ENCODE measurements at regions of chr9 and their contacts with region 1.

Region 1: DNA sequence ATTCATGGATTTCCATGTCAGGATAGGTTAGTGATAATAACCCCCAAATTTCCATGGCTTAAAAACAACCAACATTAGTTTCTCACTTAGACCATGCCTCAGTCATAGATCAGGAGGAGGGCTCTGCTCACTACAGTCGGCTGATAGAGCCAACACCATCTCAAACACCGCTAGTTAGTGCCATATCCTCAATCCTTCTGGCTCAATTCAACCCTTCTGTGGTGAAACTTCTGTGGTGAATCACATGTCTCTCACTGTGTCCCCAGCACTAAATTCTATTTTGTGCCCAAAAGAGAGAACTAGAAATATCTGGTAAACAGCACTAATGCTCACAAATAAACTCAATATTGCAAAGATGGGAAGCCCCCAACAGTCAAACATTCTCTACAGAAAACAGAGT is 21.1 kb downstream of the ECPAS start:
- DNase-seq: no peak
- H3K4me3 ChIP-seq: no peak overlapping the region
- H3K27ac ChIP-seq: no peak overlapping the region
- H3K4me1 ChIP-seq: no peaks in the 10 kb centered on the region
- H3K27me3 ChIP-seq: no peaks in the 10 kb centered on the region
- CTCF ChIP-seq: no peak
- POLR2A ChIP-seq: no peak

Region 2: DNA sequence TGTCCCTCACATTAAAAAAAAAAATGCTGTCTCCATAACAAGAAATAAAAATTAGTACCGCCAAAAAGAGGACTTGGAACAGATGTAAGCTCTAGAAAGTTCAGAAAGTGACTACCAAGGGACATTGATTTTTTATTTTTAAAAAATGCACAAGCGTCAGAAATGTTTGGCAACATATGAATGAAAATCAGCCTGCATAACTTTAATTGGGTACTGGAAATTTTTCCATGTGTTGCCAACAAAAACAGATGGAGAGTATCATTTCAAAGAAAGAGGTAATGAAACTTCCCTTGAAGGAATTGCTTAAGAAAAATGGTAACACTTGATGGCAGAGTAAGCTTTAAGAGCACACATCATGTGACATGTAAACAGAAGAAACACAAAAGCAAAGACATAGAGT is 180.2 kb before region 1 on chr9:
- intact Hi-C with region 1: no loop called
- DNase-seq: no peak
- H3K4me3 ChIP-seq: no peak overlapping the region
- H3K27ac ChIP-seq: no peak overlapping the region
- H3K4me1 ChIP-seq: no peaks in the 10 kb centered on the region
- H3K27me3 ChIP-seq: no peaks in the 10 kb centered on the region
- CTCF ChIP-seq: no peak
- POLR2A ChIP-seq: no peak

Region 3: GRCh38 chr9:111516061-111516465 is 53.0 kb after region 1 on chr9:
- intact Hi-C with region 1: loop called (anchors 2 kb)
- DNase-seq: no peak
- H3K4me3 ChIP-seq: no peak overlapping the region
- H3K27ac ChIP-seq: no peak overlapping the region
- H3K4me1 ChIP-seq: no peaks in the 10 kb centered on the region
- H3K27me3 ChIP-seq: no peaks in the 10 kb centered on the region
- CTCF ChIP-seq: no peak
- POLR2A ChIP-seq: no peak

Region 4: GRCh38 chr9:112747094-112747493 is 1284.0 kb after region 1 on chr9:
- intact Hi-C with region 1: loop called (anchors 5 kb)
- DNase-seq: no peak
- H3K4me3 ChIP-seq: no peak overlapping the region
- H3K27ac ChIP-seq: no peak overlapping the region
- H3K4me1 ChIP-seq: no peaks in the 10 kb centered on the region
- H3K27me3 ChIP-seq: no peaks in the 10 kb centered on the region
- CTCF ChIP-seq: no peak
- POLR2A ChIP-seq: no peak

Measured in breast epithelium (tissue), 4 donors.